CD4-positive, alpha-beta memory T cell (primary cell): ENCODE measurements at regions of chr20 and their contacts with region 1.

Region 1: DNA sequence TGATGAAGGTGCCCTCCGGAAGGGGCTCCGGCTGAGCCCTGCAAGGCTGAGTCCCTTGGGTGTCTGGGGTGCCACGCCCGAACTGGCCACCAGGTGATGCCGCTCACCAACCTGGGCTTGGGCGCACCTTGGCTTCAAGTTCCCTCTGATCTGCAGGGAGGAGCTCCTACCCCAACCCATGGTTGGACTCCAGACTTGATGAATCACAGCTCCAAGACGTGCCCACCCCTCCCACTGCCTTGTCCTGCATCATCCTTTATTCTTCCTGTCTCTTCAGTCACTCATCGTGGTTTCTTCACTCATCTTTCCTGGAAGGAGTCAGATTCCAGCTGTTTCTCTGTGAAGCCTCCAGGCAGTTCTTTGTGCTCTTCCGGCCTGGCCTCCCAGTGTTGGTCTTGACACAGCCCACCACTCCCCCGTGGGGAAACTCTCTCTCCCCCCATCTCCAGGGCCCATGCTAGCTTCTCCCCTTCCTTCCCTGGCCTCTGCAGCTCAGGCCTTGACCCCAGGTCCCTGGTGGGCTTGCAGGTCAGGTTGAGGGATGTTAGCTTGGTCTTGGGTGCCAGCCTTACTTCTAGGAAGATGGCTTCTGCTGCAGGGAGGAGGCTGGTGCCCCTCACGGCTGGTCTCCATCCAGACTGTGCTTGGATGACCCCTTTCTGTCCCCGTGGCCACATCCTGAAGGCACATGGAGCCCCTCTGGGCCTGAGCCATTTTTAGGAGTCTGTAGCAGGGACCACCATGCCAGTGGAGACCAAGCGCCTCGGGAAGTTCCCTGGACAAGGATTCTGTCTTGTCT is 2.6 kb upstream of the ZBP1 start:
- DNase-seq: peak; percentile 64 to 77 (median 66)
- H3K4me3 ChIP-seq: no peak overlapping the region
- H3K4me3 Mint-ChIP-seq: peak overlapping the region in 6 of 8 donors; percentile 66 to 90 (median 74)
- H3K27ac ChIP-seq: no peak overlapping the region
- H3K27ac Mint-ChIP-seq: peak overlapping the region; percentile 88 to 96 (median 91)
- H3K4me1 ChIP-seq: peaks cover 76% of the 10 kb centered on the region
- H3K4me1 Mint-ChIP-seq: peaks cover 30 to 91% (median 65%) of the 10 kb centered on the region in 4 donors
- H3K27me3 ChIP-seq: no peaks in the 10 kb centered on the region
- H3K27me3 Mint-ChIP-seq: no peaks in the 10 kb centered on the region

Region 2: GRCh38 chr20:57006411-57007170 is 616.2 kb before region 1 on chr20:
- CTCF ChIA-PET with region 1: no interaction called
- POLR2A ChIA-PET with region 1: no interaction called
- intact Hi-C with region 1: no loop called
- DNase-seq: no peak
- H3K4me3 ChIP-seq: no peak overlapping the region
- H3K4me3 Mint-ChIP-seq: no peak overlapping the region
- H3K27ac ChIP-seq: no peak overlapping the region
- H3K27ac Mint-ChIP-seq: no peak overlapping the region
- H3K4me1 ChIP-seq: no peaks in the 10 kb centered on the region
- H3K4me1 Mint-ChIP-seq: no peaks in the 10 kb centered on the region
- H3K27me3 ChIP-seq: no peaks in the 10 kb centered on the region
- H3K27me3 Mint-ChIP-seq: peaks cover 16 to 18% of the 10 kb centered on the region in 2 donors

Region 3: DNA sequence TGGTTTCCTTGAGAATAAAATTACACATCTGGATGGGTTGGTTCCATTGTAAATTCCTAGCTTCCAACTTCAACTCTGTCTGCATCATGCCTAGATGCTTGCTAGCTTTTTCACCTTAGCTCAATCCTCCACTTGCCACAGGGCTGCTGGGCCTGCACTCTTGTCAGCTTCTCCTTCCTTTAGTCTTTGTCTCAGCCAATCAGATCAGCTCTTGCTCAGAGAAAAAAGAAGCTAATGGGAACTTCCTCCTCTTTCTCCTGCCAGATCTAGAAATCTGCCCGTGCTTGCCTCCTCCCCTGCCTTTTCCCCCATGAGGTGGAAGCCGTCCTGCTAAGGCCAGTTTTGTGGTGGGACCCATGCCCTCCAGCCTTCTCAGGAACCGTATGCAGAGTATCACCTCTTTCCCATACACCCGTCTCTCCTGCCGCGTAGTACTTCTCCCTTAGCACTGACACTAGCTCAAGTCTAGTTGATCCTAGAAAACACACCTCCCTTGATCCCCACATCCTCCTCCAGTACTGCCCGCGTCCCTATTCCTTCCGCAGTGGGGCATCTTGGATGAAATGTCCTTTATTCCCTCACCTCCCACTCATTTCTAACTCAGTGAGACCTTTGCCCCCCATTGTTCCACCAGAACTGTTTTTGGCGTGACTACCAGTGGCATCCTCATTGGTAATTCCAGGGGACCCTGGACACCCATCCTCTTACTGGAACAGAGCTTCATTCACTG is 253.0 kb before region 1 on chr20:
- CTCF ChIA-PET with region 1: no interaction called
- POLR2A ChIA-PET with region 1: no interaction called
- intact Hi-C with region 1: no loop called
- DNase-seq: no peak
- H3K4me3 ChIP-seq: no peak overlapping the region
- H3K4me3 Mint-ChIP-seq: no peak overlapping the region
- H3K27ac ChIP-seq: no peak overlapping the region
- H3K27ac Mint-ChIP-seq: peak overlapping the region in 3 of 7 donors; percentile 16 to 48 (median 43)
- H3K4me1 ChIP-seq: peaks cover 4% of the 10 kb centered on the region
- H3K4me1 Mint-ChIP-seq: peaks cover 6 to 29% (median 11%) of the 10 kb centered on the region in 4 donors
- H3K27me3 ChIP-seq: no peaks in the 10 kb centered on the region
- H3K27me3 Mint-ChIP-seq: no peaks in the 10 kb centered on the region

Region 4: DNA sequence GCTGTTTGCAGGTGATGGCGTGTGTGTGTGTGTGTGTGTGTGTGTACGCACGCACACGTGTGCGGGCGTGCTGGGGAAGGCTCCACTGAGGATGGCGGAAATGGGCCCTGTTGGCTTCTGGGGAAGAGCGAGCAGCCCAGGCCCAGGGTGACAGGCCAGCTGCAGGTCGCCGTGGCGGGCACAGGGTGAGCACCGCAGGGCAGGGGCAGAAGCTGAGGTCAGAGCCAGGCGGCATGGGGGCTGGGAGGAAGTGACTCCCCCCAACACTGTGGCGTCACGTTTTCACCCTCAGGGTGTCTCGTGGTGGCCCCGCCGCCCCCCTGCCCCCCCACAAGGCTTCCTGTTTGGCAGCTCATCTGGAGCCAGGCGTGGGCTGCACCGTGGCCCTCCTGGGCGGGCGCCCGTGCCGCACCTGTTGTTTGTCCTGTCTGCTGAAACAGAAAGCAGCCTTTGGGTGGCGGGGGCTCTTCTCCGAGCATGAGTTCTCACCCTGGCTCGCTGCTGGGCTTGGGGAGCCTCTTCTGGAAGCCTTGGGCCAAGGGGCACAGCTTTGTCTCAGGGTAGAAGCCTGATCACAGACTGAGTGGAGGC is 224.5 kb before region 1 on chr20:
- CTCF ChIA-PET with region 1: interaction called, 3 read pairs
- POLR2A ChIA-PET with region 1: interaction called, 27 read pairs
- intact Hi-C with region 1: loop called (anchors 5 kb)
- DNase-seq: peak; percentile 92 to 97 (median 94)
- H3K4me3 ChIP-seq: peak overlapping the region; percentile 43 to 74
- H3K4me3 Mint-ChIP-seq: peak overlapping the region; percentile 80 to 91 (median 84)
- H3K27ac ChIP-seq: peak overlapping the region; percentile 90
- H3K27ac Mint-ChIP-seq: peak overlapping the region; percentile 97 to 100 (median 99)
- H3K4me1 ChIP-seq: peaks cover 97% of the 10 kb centered on the region
- H3K4me1 Mint-ChIP-seq: peaks cover 52 to 96% (median 76%) of the 10 kb centered on the region in 4 donors
- H3K27me3 ChIP-seq: no peaks in the 10 kb centered on the region
- H3K27me3 Mint-ChIP-seq: peaks cover 0 to 3% of the 10 kb centered on the region in 2 donors

Region 5: DNA sequence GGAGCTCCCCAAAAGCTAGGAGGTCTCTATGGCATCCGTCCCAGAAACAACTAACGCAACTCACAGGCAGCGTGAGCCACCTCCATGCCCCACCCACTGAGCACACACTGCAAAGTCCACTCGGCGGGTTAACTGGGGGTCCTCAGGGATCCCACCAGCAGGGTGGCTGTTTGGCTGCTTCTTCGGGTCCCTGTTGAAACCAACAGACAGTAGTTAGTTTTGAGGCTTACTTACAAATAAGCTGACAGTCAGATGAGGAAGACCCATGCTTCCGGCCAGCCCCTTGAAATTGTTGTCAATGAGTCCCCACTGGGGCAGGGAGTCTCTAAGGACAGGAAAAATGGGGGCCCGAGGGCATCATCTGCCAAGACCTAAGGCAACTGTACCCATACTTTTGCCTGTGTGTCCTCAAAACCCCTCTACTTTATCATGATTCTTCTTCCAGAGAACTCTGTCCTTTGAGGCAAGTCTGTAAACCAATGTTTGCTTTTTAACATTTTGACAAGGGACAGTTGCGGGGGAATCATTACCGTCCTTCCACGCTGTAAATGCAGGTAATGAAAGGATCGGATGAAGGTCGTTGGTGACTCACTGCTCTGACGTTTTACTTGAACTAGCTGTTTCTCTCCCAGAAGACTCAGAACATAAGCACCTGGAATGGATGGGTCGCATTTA is 64.0 kb before region 1 on chr20:
- CTCF ChIA-PET with region 1: no interaction called
- POLR2A ChIA-PET with region 1: no interaction called
- intact Hi-C with region 1: no loop called
- DNase-seq: no peak
- H3K4me3 ChIP-seq: no peak overlapping the region
- H3K4me3 Mint-ChIP-seq: no peak overlapping the region
- H3K27ac ChIP-seq: no peak overlapping the region
- H3K27ac Mint-ChIP-seq: no peak overlapping the region
- H3K4me1 ChIP-seq: no peaks in the 10 kb centered on the region
- H3K4me1 Mint-ChIP-seq: no peaks in the 10 kb centered on the region
- H3K27me3 ChIP-seq: no peaks in the 10 kb centered on the region
- H3K27me3 Mint-ChIP-seq: peaks cover 13 to 33% of the 10 kb centered on the region in 2 donors

Region 6: DNA sequence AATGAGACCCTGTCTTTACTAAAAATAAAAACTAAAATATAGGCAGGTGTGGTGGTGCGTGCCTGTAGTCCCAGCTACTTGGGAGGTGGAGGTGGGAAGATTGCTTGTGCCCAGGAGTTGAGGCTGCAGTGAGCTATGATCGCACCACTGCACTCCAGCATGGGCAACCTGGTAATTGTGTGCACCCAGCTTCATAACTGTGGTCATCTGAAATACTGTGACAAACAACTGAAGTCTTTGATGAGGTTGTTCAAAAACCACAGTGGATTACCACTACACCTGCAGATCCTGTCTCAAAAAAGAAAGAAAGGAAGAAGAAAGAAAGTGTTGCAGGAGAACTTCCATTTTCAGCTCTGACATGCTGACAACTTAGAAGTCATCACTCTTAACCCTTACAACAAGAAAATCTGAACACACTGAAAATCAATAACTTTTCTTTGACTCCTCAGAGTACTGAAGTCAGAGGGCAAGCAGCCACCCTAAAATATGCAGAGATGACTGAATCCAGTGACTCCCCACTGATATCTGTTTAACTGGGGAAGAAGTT is 11.2 kb after region 1 on chr20:
- CTCF ChIA-PET with region 1: interaction called, 20 read pairs
- POLR2A ChIA-PET with region 1: interaction called, 255 read pairs
- intact Hi-C with region 1: loop called (anchors 2 kb)
- DNase-seq: peak; percentile 48 to 74 (median 65)
- H3K4me3 ChIP-seq: no peak overlapping the region
- H3K4me3 Mint-ChIP-seq: peak overlapping the region in 7 of 8 donors; percentile 36 to 74 (median 68)
- H3K27ac ChIP-seq: no peak overlapping the region
- H3K27ac Mint-ChIP-seq: peak overlapping the region in 6 of 7 donors; percentile 35 to 84 (median 56)
- H3K4me1 ChIP-seq: peaks cover 48% of the 10 kb centered on the region
- H3K4me1 Mint-ChIP-seq: peaks cover 34 to 56% (median 45%) of the 10 kb centered on the region in 4 donors
- H3K27me3 ChIP-seq: peaks cover 6% of the 10 kb centered on the region
- H3K27me3 Mint-ChIP-seq: peaks cover 0 to 13% of the 10 kb centered on the region in 2 donors

Region 7: DNA sequence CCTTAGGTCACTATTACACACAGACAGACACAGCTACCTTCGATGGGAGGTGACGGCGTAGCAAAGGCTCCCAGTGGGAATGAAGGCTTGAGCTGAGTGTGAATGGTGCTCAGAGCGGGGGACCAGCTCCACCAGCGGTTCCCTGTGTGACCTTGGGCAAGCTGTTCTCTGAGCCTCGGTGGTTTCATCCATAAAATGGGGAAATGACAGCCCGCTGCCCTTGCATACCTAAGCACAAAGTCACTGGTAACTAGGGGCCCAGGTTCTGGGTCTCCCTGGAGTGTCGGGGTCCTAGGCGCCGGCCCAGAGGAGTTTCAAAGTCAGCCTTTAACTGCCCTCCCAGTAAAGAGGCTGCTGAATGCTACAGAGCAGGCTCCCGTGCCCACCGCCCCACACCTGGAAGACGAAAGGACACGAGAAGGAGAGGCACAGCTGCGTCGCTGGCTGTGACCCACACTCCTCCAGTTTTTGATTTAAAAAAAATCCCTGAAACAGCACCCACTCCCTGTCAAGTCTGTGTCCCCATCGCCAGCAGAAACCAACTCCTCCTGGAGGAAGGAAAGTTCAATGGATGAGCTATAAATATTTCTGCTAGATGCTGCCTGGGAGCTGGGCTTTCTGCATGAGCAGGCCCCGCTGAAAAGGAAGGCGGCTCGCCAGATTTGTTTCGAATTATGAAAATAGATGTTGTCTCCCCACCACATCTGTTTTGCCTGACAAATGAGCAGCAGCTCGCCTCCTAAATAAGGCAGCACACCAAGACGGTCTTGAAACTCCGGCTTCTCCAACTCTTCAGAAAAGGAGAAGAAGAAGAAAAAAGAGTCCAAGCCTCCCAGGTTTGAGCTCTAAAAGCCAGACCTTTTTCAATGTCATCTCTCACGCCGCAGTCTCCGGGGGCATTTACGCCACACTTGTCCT is 59.7 kb after region 1 on chr20:
- CTCF ChIA-PET with region 1: interaction called, 8 read pairs
- POLR2A ChIA-PET with region 1: interaction called, 3 read pairs
- intact Hi-C with region 1: loop called (anchors 1 kb)
- DNase-seq: no peak
- H3K4me3 ChIP-seq: no peak overlapping the region
- H3K4me3 Mint-ChIP-seq: no peak overlapping the region
- H3K27ac ChIP-seq: no peak overlapping the region
- H3K27ac Mint-ChIP-seq: peak overlapping the region in 1 of 7 donors; percentile 8
- H3K4me1 ChIP-seq: no peaks in the 10 kb centered on the region
- H3K4me1 Mint-ChIP-seq: peaks cover 7 to 18% (median 15%) of the 10 kb centered on the region in 4 donors
- H3K27me3 ChIP-seq: no peaks in the 10 kb centered on the region
- H3K27me3 Mint-ChIP-seq: peaks cover 4 to 5% of the 10 kb centered on the region in 2 donors

Region 8: GRCh38 chr20:57718490-57719271 is 95.9 kb after region 1 on chr20:
- CTCF ChIA-PET with region 1: no interaction called
- POLR2A ChIA-PET with region 1: no interaction called
- intact Hi-C with region 1: loop called (anchors 1 kb)
- DNase-seq: peak; percentile 85 to 95 (median 88)
- H3K4me3 ChIP-seq: no peak overlapping the region
- H3K4me3 Mint-ChIP-seq: peak overlapping the region; percentile 57 to 78 (median 70)
- H3K27ac ChIP-seq: no peak overlapping the region
- H3K27ac Mint-ChIP-seq: peak overlapping the region; percentile 53 to 87 (median 78)
- H3K4me1 ChIP-seq: peaks cover 7% of the 10 kb centered on the region
- H3K4me1 Mint-ChIP-seq: peaks cover 2 to 12% (median 7%) of the 10 kb centered on the region in 4 donors
- H3K27me3 ChIP-seq: no peaks in the 10 kb centered on the region
- H3K27me3 Mint-ChIP-seq: peaks cover 7 to 12% of the 10 kb centered on the region in 2 donors

Region 9: DNA sequence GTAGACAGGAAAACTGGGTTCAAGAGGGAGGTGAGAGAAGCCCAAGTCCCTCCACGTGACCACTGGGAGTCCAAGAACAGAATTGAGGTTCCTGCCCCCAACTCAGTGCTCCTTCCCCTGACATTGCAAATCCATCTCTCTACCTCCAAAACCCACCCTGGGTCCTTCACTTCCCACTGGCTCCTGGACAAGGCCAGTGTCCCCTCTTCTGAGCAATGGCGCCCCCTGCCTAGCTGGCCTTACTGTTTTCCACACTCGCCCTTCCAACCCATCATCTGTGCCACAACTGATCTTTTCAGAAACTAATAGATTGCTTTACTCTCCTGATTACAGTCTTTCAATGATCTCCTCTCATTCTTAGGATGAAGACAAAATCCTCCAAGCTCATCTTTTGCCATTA is 405.3 kb after region 1 on chr20:
- CTCF ChIA-PET with region 1: no interaction called
- POLR2A ChIA-PET with region 1: no interaction called
- intact Hi-C with region 1: no loop called
- DNase-seq: no peak
- H3K4me3 ChIP-seq: no peak overlapping the region
- H3K4me3 Mint-ChIP-seq: no peak overlapping the region
- H3K27ac ChIP-seq: no peak overlapping the region
- H3K27ac Mint-ChIP-seq: peak overlapping the region in 1 of 7 donors; percentile 43
- H3K4me1 ChIP-seq: no peaks in the 10 kb centered on the region
- H3K4me1 Mint-ChIP-seq: peaks cover 0 to 2% (median 0%) of the 10 kb centered on the region in 4 donors
- H3K27me3 ChIP-seq: no peaks in the 10 kb centered on the region
- H3K27me3 Mint-ChIP-seq: peaks cover 15 to 23% of the 10 kb centered on the region in 2 donors

Region 10: DNA sequence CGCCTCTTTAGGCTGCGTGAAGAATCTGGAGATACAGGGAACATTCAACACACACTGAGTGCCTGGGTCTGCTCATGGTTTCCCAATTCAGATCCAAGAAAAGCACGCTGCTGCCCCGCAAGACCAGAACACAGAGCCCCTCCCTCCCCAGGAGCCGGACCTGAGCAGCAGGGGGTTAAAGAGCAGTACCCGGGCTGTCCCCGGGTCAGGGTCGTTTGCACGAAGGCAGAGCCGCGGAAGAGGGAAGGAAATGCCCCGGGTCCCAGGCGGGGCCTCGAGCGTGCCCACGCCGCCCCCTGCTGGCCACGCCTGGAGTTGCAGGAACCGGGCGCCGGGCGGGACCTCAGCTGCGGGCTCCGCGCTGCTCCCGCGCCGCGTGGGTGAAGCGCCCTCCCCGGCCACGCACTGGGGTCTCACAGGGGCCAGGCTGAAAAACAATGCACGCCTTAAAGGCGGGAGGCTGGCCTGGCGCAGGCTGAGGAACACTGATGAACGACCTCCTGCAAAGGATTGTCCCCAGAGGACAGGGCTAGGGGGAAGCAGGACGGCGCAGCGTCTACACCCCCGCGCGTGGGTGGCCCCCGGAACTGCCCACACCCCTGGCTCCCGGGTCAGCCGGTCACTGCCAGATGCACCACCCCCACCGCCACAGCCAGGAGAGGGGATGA is 556.8 kb after region 1 on chr20:
- CTCF ChIA-PET with region 1: interaction called, 30 read pairs
- POLR2A ChIA-PET with region 1: interaction called, 5 read pairs
- intact Hi-C with region 1: loop called (anchors 1 kb)
- DNase-seq: peak in 4 of 5 donors; percentile 57 to 66 (median 59)
- H3K4me3 ChIP-seq: no peak overlapping the region
- H3K4me3 Mint-ChIP-seq: peak overlapping the region; percentile 29 to 83 (median 72)
- H3K27ac ChIP-seq: no peak overlapping the region
- H3K27ac Mint-ChIP-seq: peak overlapping the region in 2 of 7 donors; percentile 22 to 36
- H3K4me1 ChIP-seq: peaks cover 10% of the 10 kb centered on the region
- H3K4me1 Mint-ChIP-seq: peaks cover 0 to 9% (median 4%) of the 10 kb centered on the region in 4 donors
- H3K27me3 ChIP-seq: peaks cover 8% of the 10 kb centered on the region
- H3K27me3 Mint-ChIP-seq: peaks cover 10 to 15% of the 10 kb centered on the region in 2 donors